Activated T-helper 2 cell treated with anti-CD3 and anti-CD28 coated beads, Interferon-gamma antibody, Interleukin-2, Interleukin-4, amounts not matched to agents 10 μg/mL and 5 μg/mL and 100 μg/mL, durations not matched to agents 14 hours and 24 hours and 36 hours (primary cell): ENCODE measurements at regions of chr1 and their contacts with region 1.

Region 1: DNA sequence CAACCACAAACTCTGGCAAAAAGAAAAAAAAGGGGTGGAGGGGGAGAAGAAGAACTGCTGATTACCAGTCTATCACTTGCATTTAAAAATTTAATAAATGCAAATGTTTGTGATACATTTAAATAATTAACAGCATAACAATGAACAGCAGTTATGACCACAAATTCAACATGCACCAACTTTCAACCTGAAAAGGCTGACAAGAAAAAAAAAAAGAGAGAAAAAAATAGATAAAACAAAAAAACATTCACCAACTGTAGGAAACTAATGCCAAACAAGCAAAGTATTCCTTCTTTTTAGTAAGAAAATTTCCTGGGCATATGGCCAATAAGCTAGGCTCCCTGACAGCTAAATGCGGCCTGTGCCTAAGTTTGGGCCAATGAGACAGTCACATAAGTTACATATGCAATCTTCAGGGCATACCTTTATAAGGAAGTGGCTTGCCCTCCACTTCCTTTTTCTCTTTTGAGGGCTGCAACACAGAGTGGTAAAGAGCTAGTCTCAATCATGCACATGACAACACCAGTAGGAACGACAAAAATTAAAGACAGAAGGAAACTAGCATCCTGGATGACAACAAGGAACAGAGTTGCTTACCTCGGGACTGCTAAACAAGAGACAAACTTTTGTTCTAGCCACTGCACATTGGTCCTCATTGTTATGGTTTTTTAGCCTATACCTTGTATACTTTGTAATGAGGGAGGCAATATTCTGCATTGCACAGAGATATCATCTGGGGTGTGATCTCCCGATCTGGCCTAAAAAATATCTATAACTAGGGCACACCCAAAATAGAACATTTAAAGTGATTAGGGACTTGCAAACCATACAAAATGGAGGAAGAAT is 24.2 kb upstream of the PHTF1 start:
- DNase-seq: peak; percentile 45
- H3K4me3 Mint-ChIP-seq: peak overlapping the region; percentile 68
- H3K27ac Mint-ChIP-seq: peak overlapping the region; percentile 94
- H3K4me1 Mint-ChIP-seq: peaks cover 34% of the 10 kb centered on the region
- H3K27me3 Mint-ChIP-seq: no peaks in the 10 kb centered on the region

Region 2: GRCh38 chr1:113804421-113805255 is 21.2 kb after region 1 on chr1:
- intact Hi-C with region 1: loop called (anchors 1 kb)
- DNase-seq: no peak
- H3K4me3 Mint-ChIP-seq: no peak overlapping the region
- H3K27ac Mint-ChIP-seq: peak overlapping the region; percentile 40
- H3K4me1 Mint-ChIP-seq: peaks cover 58% of the 10 kb centered on the region
- H3K27me3 Mint-ChIP-seq: no peaks in the 10 kb centered on the region